ENCODE measurements at regions of chr5 and their contacts with region 1.

Region 1: GRCh38 chr5:14871210-14872069 is at the start of gene ANKH:
- DNase-seq: peak; percentile 89
- ATAC-seq: peak; percentile 80
- H3K4me3 Mint-ChIP-seq: peak within 1 kb of the TSS; percentile 97
- H3K27ac Mint-ChIP-seq: peak within 1 kb of the TSS; percentile 97
- H3K4me1 Mint-ChIP-seq: peaks cover 33% of the 10 kb centered on the region
- H3K27me3 Mint-ChIP-seq: no peaks in the 10 kb centered on the region
- total RNA-seq, gene ANKH: 72.8 to 76.4 TPM

Region 2: GRCh38 chr5:14142827-14143548 is 728.5 kb before region 1 on chr5 and contains the start of gene TRIO:
- CTCF ChIA-PET with region 1: no interaction called
- POLR2A ChIA-PET with region 1: no interaction called
- intact Hi-C with region 1: loop called in 1 of 2 experiments (anchors 5 kb)
- DNase-seq: peak; percentile 88
- ATAC-seq: peak; percentile 76
- H3K4me3 Mint-ChIP-seq: peak within 1 kb of the TSS; percentile 75
- H3K27ac Mint-ChIP-seq: peak within 1 kb of the TSS; percentile 78
- H3K4me1 Mint-ChIP-seq: peaks cover 7% of the 10 kb centered on the region
- H3K27me3 Mint-ChIP-seq: peaks cover 38% of the 10 kb centered on the region
- total RNA-seq, gene TRIO: 9.2 to 11.3 TPM

Region 3: GRCh38 chr5:14581333-14581890 is 290.0 kb before region 1 on chr5 and contains the start of gene OTULINL:
- CTCF ChIA-PET with region 1: no interaction called
- POLR2A ChIA-PET with region 1: no interaction called
- intact Hi-C with region 1: loop called in 1 of 2 experiments (anchors 2 kb)
- DNase-seq: peak; percentile 93
- ATAC-seq: peak; percentile 94
- H3K4me3 Mint-ChIP-seq: peak within 1 kb of the TSS; percentile 77
- H3K27ac Mint-ChIP-seq: peak within 1 kb of the TSS; percentile 60
- H3K4me1 Mint-ChIP-seq: peaks cover 30% of the 10 kb centered on the region
- H3K27me3 Mint-ChIP-seq: peaks cover 8% of the 10 kb centered on the region
- total RNA-seq, gene OTULINL: 9.4 to 10.9 TPM

Region 4: DNA sequence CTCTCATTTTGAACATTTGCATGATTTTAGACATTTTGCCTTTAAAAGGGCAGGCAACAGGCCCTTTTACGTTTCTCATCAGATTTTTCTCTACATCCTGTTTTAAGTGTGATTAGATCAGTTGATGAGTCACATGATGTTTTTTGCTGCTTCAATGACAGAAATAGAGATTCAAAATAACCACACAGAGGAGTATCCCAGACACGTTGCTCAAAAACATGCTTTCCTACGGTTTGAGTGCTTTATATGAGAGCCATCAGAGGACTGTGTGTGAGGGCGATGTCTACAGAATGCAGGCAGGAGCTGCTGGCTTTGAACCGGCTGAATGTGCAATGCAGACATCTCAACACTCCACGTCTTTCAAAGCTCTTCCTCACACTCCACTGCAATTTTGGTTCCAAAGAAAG is 164.8 kb before region 1 on chr5:
- CTCF ChIA-PET with region 1: interaction called, 4 read pairs
- POLR2A ChIA-PET with region 1: no interaction called
- intact Hi-C with region 1: loop called in 1 of 2 experiments (anchors 1 kb)
- DNase-seq: peak; percentile 51
- ATAC-seq: peak; percentile 95
- H3K4me3 Mint-ChIP-seq: peak overlapping the region; percentile 48
- H3K27ac Mint-ChIP-seq: peak overlapping the region; percentile 98
- H3K4me1 Mint-ChIP-seq: peaks cover 83% of the 10 kb centered on the region
- H3K27me3 Mint-ChIP-seq: no peaks in the 10 kb centered on the region

Region 5: GRCh38 chr5:14809369-14810155 is 61.9 kb before region 1 on chr5:
- CTCF ChIA-PET with region 1: interaction called, 3 read pairs
- POLR2A ChIA-PET with region 1: no interaction called
- intact Hi-C with region 1: loop called (anchors 1 kb)
- DNase-seq: peak; percentile 87
- ATAC-seq: peak; percentile 96
- H3K4me3 Mint-ChIP-seq: peak overlapping the region; percentile 55
- H3K27ac Mint-ChIP-seq: peak overlapping the region; percentile 71
- H3K4me1 Mint-ChIP-seq: peaks cover 51% of the 10 kb centered on the region
- H3K27me3 Mint-ChIP-seq: no peaks in the 10 kb centered on the region

Region 6: GRCh38 chr5:14925326-14925725 is 53.9 kb after region 1 on chr5:
- CTCF ChIA-PET with region 1: no interaction called
- POLR2A ChIA-PET with region 1: no interaction called
- intact Hi-C with region 1: loop called (anchors 1 to 2 kb)
- DNase-seq: no peak
- ATAC-seq: peak; percentile 19
- H3K4me3 Mint-ChIP-seq: peak overlapping the region; percentile 42
- H3K27ac Mint-ChIP-seq: peak overlapping the region; percentile 89
- H3K4me1 Mint-ChIP-seq: peaks cover 60% of the 10 kb centered on the region
- H3K27me3 Mint-ChIP-seq: no peaks in the 10 kb centered on the region

Region 7: DNA sequence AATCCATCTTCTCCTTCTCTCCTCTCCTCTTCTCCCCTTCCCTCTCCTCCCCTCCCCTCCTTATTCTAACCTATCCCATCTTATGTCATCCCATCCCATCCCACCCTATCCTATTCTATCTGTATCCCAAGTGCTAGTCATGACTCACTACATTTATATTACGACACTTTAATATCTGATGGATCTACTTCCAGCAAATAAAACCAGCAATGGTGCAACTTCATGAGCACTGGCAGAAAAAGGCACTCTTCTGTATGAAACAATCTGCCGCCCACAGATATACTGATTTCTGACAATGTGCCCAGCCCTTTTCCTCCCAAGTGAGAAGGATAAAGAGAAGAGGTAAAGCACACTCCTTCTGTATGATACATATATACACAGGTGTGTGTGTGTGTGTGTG is 86.8 kb after region 1 on chr5:
- CTCF ChIA-PET with region 1: no interaction called
- POLR2A ChIA-PET with region 1: no interaction called
- intact Hi-C with region 1: no loop called
- DNase-seq: no peak
- ATAC-seq: no peak
- H3K4me3 Mint-ChIP-seq: no peak overlapping the region
- H3K27ac Mint-ChIP-seq: no peak overlapping the region
- H3K4me1 Mint-ChIP-seq: peaks cover 2% of the 10 kb centered on the region
- H3K27me3 Mint-ChIP-seq: no peaks in the 10 kb centered on the region

Region 8: DNA sequence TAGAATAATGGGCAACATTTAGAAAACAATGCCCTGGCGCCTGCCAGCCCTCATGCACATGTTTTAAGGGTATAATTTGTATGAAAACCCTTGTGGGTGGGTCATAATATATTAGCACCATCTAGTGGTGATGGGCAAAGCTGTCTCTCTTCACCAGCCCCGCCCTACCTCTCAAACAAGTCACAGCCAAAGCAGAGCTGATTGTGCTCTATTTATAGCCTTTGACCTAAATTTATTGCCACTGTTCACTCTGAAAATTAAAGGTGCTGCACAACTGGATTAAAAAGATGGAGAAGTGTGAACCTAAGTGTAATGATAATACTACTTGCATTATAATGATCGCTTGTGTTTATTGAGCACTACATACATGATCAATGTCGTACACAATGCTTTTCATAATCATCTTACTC is 132.1 kb after region 1 on chr5:
- CTCF ChIA-PET with region 1: interaction called, 12 read pairs
- POLR2A ChIA-PET with region 1: no interaction called
- intact Hi-C with region 1: loop called (anchors 2 kb)
- DNase-seq: peak; percentile 70
- ATAC-seq: peak; percentile 91
- H3K4me3 Mint-ChIP-seq: no peak overlapping the region
- H3K27ac Mint-ChIP-seq: no peak overlapping the region
- H3K4me1 Mint-ChIP-seq: peaks cover 6% of the 10 kb centered on the region
- H3K27me3 Mint-ChIP-seq: no peaks in the 10 kb centered on the region

Region 9: GRCh38 chr5:15026944-15027343 is 155.5 kb after region 1 on chr5:
- CTCF ChIA-PET with region 1: no interaction called
- POLR2A ChIA-PET with region 1: no interaction called
- intact Hi-C with region 1: no loop called
- DNase-seq: no peak
- ATAC-seq: no peak
- H3K4me3 Mint-ChIP-seq: no peak overlapping the region
- H3K27ac Mint-ChIP-seq: no peak overlapping the region
- H3K4me1 Mint-ChIP-seq: no peaks in the 10 kb centered on the region
- H3K27me3 Mint-ChIP-seq: peaks cover 24% of the 10 kb centered on the region